ENCODE measurements at regions of chr7 and their contacts with region 1.

Region 1: DNA sequence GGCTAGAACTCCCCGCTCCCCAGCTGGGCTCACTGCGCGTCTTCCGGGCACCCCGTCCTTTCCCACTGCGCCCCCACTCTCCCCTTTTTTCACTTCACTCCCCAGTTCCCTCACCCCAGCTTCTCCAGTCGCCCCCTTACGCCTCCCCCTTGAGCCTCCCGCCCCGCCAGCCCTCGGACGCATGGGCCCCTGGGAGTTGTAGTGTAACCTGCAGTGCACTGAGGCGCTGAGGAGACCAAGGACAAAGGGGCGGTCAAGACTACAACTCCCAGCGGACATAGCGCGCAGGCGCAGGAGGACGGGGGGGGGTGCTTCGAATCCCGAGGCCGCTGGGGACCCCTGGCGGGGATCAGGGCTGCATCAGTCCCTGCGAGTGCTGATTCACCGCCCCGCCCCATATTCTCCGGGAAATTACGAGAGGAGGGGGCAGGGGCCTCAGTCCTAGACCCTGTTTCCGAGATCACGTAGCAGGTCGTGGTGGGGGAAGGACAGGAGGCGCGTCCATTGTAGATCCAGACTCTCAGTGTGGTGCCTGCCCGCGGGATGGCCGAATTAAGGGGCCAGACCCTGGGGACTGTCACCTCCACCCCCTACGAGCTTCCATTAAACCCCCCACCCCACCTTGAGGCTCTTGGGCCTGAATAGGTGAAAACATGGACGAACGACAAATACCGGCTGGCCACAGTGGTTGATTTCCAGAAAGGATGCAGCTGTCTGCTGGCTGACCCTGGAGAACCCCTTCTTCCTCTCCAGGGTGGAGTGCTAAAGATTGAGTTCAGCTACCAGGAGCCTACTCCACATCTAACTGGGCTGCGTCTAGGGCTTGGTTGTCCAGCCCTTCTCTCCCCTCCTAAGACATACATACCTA is 554 bp upstream of the YWHAG start:
- DNase-seq: peak; percentile 96
- H3K4me3 ChIP-seq: peak overlapping the region; percentile 62 to 98 (median 94)
- H3K27ac ChIP-seq: peak overlapping the region; percentile 92
- H3K4me1 ChIP-seq: peaks cover 22% of the 10 kb centered on the region
- H3K27me3 ChIP-seq: no peaks in the 10 kb centered on the region
- CTCF ChIP-seq: peak; percentile 51 to 81

Region 2: DNA sequence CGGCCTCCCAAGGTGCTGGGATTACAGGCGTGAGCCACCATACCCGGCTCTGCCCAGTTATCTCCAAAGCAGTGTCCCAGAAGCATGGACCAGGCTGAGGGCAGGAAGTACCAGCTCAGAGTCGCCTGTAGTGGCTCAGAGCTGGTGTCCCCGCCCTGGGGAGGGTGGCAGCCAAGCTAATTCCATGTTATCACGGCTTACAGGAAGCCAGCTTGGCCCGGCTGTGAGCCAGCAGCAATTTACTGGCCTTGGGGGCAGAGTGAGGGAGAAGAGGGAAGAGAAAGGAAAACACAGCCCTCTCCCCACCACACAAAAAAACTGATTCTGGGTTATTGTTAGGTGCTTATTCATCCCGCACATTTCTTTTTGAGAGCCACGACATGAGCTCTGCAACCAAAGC is 708.7 kb before region 1 on chr7:
- CTCF ChIA-PET with region 1: no interaction called
- dilution Hi-C with region 1: no loop called
- in situ Hi-C with region 1: no loop called
- intact Hi-C with region 1: no loop called
- DNase-seq: no peak
- H3K4me3 ChIP-seq: no peak overlapping the region
- H3K27ac ChIP-seq: no peak overlapping the region
- H3K4me1 ChIP-seq: no peaks in the 10 kb centered on the region
- H3K27me3 ChIP-seq: no peaks in the 10 kb centered on the region
- CTCF ChIP-seq: no peak

Region 3: DNA sequence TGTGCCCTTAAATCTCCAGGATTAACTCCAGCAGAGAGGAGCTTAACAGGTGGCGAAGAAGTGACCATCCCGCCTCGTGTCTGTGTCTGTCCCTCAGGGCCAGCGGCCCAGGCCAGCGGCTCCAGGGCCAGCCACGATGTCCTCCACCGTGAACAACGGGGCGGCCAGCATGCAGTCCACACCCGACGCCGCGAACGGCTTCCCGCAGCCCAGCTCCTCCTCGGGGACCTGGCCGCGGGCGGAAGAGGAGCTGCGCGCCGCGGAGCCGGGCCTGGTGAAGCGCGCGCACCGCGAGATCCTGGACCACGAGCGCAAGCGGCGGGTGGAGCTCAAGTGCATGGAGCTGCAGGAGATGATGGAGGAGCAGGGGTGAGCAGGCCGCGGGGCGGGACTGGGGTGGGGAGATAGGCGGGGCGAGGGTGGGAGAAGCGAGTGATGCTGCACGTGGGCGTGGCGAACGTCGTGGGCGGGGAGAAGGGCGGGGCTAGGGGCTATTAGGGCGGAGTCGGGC is 124.4 kb before region 1 on chr7:
- CTCF ChIA-PET with region 1: no interaction called
- dilution Hi-C with region 1: no loop called
- in situ Hi-C with region 1: no loop called
- intact Hi-C with region 1: no loop called
- DNase-seq: peak; percentile 81
- H3K4me3 ChIP-seq: no peak overlapping the region
- H3K27ac ChIP-seq: no peak overlapping the region
- H3K4me1 ChIP-seq: peaks cover 3% of the 10 kb centered on the region
- H3K27me3 ChIP-seq: no peaks in the 10 kb centered on the region
- CTCF ChIP-seq: no peak

Region 4: DNA sequence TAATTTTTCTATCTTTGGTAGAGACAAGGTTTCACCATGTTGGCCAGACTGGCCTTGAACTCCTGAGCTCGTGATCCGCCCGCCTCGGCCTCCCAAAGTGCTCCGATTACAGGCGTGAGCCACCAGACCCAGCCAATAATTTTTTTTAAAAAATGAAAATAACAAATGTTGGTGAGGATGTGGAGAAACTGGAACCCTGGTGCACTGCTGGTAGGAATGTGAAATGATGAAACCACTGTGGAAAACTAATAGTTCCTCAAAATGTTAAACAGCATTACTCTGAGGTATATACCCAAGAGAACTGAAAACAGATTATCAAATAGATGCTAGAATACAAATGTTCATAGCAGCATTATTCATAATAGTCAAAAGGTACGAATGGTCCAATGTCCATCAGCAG is 22.5 kb after region 1 on chr7:
- CTCF ChIA-PET with region 1: no interaction called
- dilution Hi-C with region 1: no loop called
- in situ Hi-C with region 1: no loop called
- intact Hi-C with region 1: loop called (anchors 1 kb)
- DNase-seq: no peak
- H3K4me3 ChIP-seq: no peak overlapping the region
- H3K27ac ChIP-seq: no peak overlapping the region
- H3K4me1 ChIP-seq: peaks cover 8% of the 10 kb centered on the region
- H3K27me3 ChIP-seq: no peaks in the 10 kb centered on the region
- CTCF ChIP-seq: peak in 1 of 2 donors; percentile 11

Region 5: GRCh38 chr7:76393116-76394031 is 34.0 kb after region 1 on chr7:
- CTCF ChIA-PET with region 1: no interaction called
- dilution Hi-C with region 1: no loop called
- in situ Hi-C with region 1: no loop called
- intact Hi-C with region 1: loop called (anchors 1 kb)
- DNase-seq: peak; percentile 81
- H3K4me3 ChIP-seq: peak overlapping the region; percentile 29 to 61 (median 54)
- H3K27ac ChIP-seq: peak overlapping the region; percentile 49
- H3K4me1 ChIP-seq: peaks cover 17% of the 10 kb centered on the region
- H3K27me3 ChIP-seq: no peaks in the 10 kb centered on the region
- CTCF ChIP-seq: no peak

Region 6: GRCh38 chr7:76423666-76424412 is 64.5 kb after region 1 on chr7:
- CTCF ChIA-PET with region 1: no interaction called
- dilution Hi-C with region 1: loop called (anchors 5 kb)
- in situ Hi-C with region 1: loop called in 1 of 2 experiments (anchors 5 kb)
- intact Hi-C with region 1: loop called (anchors 1 kb)
- DNase-seq: no peak
- H3K4me3 ChIP-seq: no peak overlapping the region
- H3K27ac ChIP-seq: peak overlapping the region; percentile 96
- H3K4me1 ChIP-seq: peaks cover 28% of the 10 kb centered on the region
- H3K27me3 ChIP-seq: no peaks in the 10 kb centered on the region
- CTCF ChIP-seq: no peak

Region 7: DNA sequence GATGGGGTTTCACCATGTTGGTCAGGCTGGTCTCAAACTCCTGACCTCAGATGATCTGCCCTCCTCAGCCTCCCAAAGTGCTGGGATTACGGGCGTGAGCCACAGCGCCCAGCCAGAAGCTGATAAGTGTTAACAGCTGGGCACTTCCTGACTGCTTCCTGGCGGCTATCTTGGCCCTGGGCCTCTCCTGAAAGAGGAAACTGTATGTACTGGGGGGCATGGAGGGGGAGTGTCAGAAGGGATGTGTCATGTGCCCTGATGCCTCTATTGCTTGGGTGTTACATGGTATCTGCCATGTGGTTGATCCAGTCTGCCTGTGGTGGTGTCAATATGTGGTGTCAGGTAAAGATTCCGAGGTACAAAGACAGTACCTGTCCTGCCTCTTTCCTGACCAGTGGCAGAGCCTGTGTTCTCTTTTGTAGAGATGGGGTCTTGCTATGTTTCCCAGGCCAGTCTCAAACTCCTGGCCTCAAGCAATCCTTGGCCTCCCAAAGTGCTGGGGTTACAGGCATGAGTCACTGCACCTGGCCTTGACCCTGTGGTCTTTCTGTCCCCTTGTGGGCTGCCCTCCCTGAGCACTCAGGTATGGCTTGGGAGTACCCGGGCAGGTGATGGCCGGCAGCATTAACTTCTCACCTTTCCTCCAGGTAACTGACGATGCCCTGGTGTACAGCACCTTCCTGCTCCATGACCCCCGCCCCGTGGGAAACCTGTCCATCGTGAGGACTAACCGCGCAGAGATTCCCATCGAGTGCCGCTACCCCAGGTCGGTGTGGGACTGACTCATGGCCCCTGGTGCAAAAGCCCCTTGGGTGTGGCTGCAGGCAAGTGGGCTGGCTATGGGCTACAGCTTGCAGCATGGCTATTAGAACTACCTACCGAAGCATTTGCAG is 69.8 kb after region 1 on chr7:
- CTCF ChIA-PET with region 1: no interaction called
- dilution Hi-C with region 1: loop called (anchors 5 kb)
- in situ Hi-C with region 1: loop called in 1 of 2 experiments (anchors 5 kb)
- intact Hi-C with region 1: no loop called
- DNase-seq: no peak
- H3K4me3 ChIP-seq: no peak overlapping the region
- H3K27ac ChIP-seq: no peak overlapping the region
- H3K4me1 ChIP-seq: peaks cover 14% of the 10 kb centered on the region
- H3K27me3 ChIP-seq: no peaks in the 10 kb centered on the region
- CTCF ChIP-seq: no peak